ENCODE measurements at regions of chr20 and their contacts with region 1.

Region 1: GRCh38 chr20:36155991-36156390 is 1.5 kb downstream of the EPB41L1 start:
- DNase-seq: no peak
- H3K4me3 Mint-ChIP-seq: no peak overlapping the region
- H3K27ac Mint-ChIP-seq: no peak overlapping the region
- H3K4me1 Mint-ChIP-seq: peaks cover 2% of the 10 kb centered on the region
- H3K27me3 Mint-ChIP-seq: peaks cover 38% of the 10 kb centered on the region

Region 2: DNA sequence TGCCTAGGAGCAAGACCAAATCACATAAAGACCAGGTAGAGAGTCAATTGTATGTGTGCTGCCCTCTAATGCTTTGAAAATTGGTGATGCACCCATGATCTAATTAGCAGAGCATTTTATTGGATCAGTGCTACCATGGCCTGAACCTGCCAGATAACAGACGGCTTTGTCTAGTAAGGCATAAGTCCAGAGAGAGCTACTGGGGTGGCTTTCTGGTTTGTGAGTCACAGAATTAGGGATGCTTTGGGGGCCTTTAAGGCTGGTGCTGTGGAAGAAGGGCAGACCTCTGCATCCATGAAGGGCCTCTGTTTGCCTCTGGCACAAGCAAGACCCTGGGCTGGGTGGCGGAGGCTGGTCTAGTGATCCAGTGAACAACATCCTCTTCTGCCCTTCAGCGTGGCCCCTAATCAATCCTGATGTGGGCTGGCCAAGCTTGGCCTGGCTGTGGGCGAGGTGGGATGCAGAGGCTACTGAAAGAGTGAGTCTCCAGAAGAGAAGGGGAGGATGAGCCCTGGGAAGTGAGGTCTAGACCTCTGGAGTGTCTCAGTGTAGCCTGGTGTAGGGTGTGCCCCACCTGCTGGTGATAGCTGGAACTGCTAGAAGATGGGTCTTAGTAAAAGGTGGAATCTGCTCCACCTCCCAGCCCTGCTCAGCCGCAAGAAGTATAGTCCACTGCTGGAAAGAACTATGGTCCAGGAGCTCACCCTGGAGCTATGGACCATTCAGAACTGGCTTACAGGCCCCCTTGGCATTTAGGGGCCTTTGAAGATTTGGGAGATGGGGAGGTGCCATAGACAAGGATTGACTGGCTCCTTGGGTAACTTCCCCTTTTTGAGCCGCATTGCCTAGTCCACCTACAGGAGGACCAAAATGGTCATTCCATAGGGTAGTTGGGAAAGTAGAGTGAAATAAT is 43.6 kb after region 1 on chr20:
- intact Hi-C with region 1: loop called (anchors 2 kb)
- DNase-seq: peak; percentile 50
- H3K4me3 Mint-ChIP-seq: no peak overlapping the region
- H3K27ac Mint-ChIP-seq: no peak overlapping the region
- H3K4me1 Mint-ChIP-seq: peaks cover 2% of the 10 kb centered on the region
- H3K27me3 Mint-ChIP-seq: peaks cover 12% of the 10 kb centered on the region